Cardiac septum (tissue), 1 donor: ENCODE measurements at regions of chr1 and their contacts with region 1.

Region 1: GRCh38 chr1:112317140-112317539 is 78.9 kb upstream of the CTTNBP2NL start:
- DNase-seq: no peak

Region 2: DNA sequence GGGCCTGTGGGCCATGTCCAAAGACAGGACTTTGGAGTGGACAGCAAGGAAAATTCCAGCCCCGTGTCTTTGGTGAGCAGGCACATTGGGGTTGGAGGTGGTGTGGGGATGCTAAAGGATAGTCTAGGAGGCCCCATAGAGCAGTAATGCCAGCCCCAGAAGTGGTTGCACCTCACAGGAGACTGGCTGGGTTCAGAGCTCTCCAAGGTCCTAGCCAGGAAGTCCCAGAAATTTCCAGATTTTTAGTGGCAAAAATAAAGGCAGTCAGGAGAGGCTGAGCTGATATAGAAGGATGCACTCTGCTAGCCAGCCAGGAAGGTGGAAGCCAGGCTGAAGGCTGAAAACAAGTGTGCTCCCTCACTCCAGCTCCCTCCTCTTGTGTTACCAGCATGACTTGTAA is 183.7 kb before region 1 on chr1:
- intact Hi-C with region 1: loop called (anchors 10 kb)
- DNase-seq: no peak